Activated B cell treated with CpG ODN at 0.5 μM for 24 hours (primary cell): ENCODE measurements at regions of chr22 and their contacts with region 1.

Region 1: GRCh38 chr22:40161194-40161593 is 16.5 kb upstream of the TNRC6B start:
- DNase-seq: no peak
- ATAC-seq: no peak
- H3K4me3 Mint-ChIP-seq: no peak overlapping the region
- H3K27ac Mint-ChIP-seq: no peak overlapping the region
- H3K4me1 Mint-ChIP-seq: no peaks in the 10 kb centered on the region
- H3K27me3 Mint-ChIP-seq: no peaks in the 10 kb centered on the region
- CTCF ChIP-seq: no peak

Region 2: DNA sequence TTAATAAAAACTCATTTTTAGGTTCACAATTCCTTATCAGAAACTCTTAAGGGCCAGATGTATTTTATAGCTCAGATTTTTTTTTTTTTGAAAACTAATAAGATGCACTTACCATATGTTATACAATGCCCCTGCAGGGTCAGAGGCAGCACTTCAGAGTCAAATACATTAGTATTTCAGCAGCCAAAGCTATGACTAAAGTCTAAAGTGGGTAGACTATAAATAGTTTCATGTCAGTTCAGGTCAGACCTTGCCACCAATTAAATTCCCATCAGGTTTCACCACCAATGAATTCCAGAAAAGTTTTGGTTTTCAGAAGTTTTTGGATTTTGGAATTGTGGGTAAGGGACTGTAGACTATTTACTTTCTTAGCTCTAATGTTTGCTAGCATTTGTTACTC is 90.5 kb before region 1 on chr22:
- CTCF ChIA-PET with region 1: no interaction called
- POLR2A ChIA-PET with region 1: interaction called, 20 read pairs
- intact Hi-C with region 1: no loop called
- DNase-seq: no peak
- ATAC-seq: no peak
- H3K4me3 Mint-ChIP-seq: no peak overlapping the region
- H3K27ac Mint-ChIP-seq: no peak overlapping the region
- H3K4me1 Mint-ChIP-seq: peaks cover 69% of the 10 kb centered on the region
- H3K27me3 Mint-ChIP-seq: no peaks in the 10 kb centered on the region
- CTCF ChIP-seq: no peak

Region 3: GRCh38 chr22:40328546-40329456 is 167.6 kb after region 1 on chr22:
- CTCF ChIA-PET with region 1: no interaction called
- POLR2A ChIA-PET with region 1: interaction called, 10 read pairs
- intact Hi-C with region 1: no loop called
- DNase-seq: no peak
- ATAC-seq: no peak
- H3K4me3 Mint-ChIP-seq: no peak overlapping the region
- H3K27ac Mint-ChIP-seq: no peak overlapping the region
- H3K4me1 Mint-ChIP-seq: peaks cover 13% of the 10 kb centered on the region
- H3K27me3 Mint-ChIP-seq: no peaks in the 10 kb centered on the region
- CTCF ChIP-seq: no peak

Region 4: GRCh38 chr22:40396882-40397281 is 235.7 kb after region 1 on chr22:
- CTCF ChIA-PET with region 1: no interaction called
- POLR2A ChIA-PET with region 1: no interaction called
- intact Hi-C with region 1: no loop called
- DNase-seq: no peak
- ATAC-seq: no peak
- H3K4me3 Mint-ChIP-seq: peak overlapping the region; percentile 28
- H3K27ac Mint-ChIP-seq: peak overlapping the region; percentile 80
- H3K4me1 Mint-ChIP-seq: peaks cover 86% of the 10 kb centered on the region
- H3K27me3 Mint-ChIP-seq: no peaks in the 10 kb centered on the region
- CTCF ChIP-seq: no peak